ENCODE measurements at regions of chr11 and their contacts with region 1.

Region 1: DNA sequence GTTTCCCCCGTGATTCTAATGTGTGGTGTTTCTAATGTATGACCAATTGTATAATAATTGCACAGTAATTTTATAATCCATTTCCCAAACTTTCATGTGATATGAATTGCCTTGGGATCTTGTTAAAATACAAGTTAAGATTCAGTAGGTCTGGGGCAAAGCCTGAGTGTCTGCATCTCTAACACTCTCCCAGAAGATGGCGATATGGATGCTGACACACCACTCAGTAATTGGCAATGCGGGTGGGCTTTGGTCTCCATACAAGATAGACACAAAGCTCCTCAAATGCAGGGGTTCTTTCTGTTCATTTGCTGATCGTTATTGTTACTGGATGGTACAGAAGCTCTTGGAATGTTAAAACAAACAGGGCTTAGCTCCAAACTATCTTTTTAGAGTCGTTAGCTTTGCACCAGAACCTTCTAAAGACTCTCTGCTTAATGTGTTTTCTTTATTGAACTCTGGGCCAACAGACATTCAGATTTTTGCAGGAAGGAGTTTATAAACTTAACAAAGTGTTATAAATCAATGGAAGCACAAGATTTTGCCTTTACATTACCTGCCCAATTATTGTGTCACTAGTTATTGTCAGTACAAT is 45.4 kb upstream of the ANO3 start:
- DNase-seq: no peak
- ATAC-seq: no peak
- H3K4me3 Mint-ChIP-seq: no peak overlapping the region
- H3K27ac Mint-ChIP-seq: no peak overlapping the region
- H3K4me1 Mint-ChIP-seq: peaks cover 5% of the 10 kb centered on the region
- H3K27me3 Mint-ChIP-seq: peaks cover 4% of the 10 kb centered on the region
- CTCF ChIP-seq: no peak

Region 2: GRCh38 chr11:25655636-25656035 is 630.9 kb before region 1 on chr11:
- CTCF ChIA-PET with region 1: no interaction called
- POLR2A ChIA-PET with region 1: no interaction called
- intact Hi-C with region 1: no loop called
- DNase-seq: no peak
- ATAC-seq: no peak
- H3K4me3 Mint-ChIP-seq: no peak overlapping the region
- H3K27ac Mint-ChIP-seq: no peak overlapping the region
- H3K4me1 Mint-ChIP-seq: no peaks in the 10 kb centered on the region
- H3K27me3 Mint-ChIP-seq: no peaks in the 10 kb centered on the region
- CTCF ChIP-seq: no peak

Region 3: DNA sequence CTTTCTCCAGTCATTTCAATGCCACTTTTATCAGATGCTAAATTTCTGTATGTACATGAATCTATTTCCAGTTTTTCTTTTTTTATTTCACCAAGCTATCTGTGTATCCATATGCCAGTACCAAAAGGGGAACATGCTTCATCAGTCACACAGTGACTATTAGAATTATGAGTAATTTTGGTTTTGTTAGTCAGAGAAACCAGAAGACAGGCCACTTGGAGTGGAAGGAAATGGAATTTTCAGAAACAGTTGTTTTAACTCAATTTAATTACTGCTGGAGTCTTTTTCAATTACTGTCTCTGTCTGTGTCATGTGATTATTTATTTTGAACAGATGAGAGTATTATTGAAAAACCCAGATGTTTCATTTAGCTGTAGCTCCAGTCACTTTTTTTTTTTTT is 39.2 kb before region 1 on chr11:
- CTCF ChIA-PET with region 1: no interaction called
- POLR2A ChIA-PET with region 1: no interaction called
- intact Hi-C with region 1: no loop called
- DNase-seq: no peak
- ATAC-seq: no peak
- H3K4me3 Mint-ChIP-seq: no peak overlapping the region
- H3K27ac Mint-ChIP-seq: no peak overlapping the region
- H3K4me1 Mint-ChIP-seq: no peaks in the 10 kb centered on the region
- H3K27me3 Mint-ChIP-seq: peaks cover 4% of the 10 kb centered on the region
- CTCF ChIP-seq: no peak

Region 4: DNA sequence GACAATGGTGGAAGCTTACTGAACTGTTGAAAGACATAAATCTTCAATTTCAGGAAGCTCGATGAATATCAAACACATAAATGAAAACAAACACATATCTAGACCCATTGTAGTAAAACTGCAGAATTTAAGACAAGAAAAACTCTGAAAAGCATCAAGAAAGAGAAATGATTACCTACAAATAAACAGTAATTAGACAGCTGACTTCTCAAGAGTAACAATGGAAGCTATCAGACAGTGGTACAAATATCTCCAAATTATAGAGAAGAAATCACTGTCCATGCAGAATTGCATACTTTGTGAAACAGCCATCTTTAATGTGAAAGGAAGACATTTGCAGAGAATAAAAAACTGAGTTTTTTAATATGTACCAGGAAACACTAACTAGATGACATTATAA is 91.0 kb after region 1 on chr11:
- CTCF ChIA-PET with region 1: no interaction called
- POLR2A ChIA-PET with region 1: no interaction called
- intact Hi-C with region 1: no loop called
- DNase-seq: no peak
- ATAC-seq: no peak
- H3K4me3 Mint-ChIP-seq: no peak overlapping the region
- H3K27ac Mint-ChIP-seq: no peak overlapping the region
- H3K4me1 Mint-ChIP-seq: no peaks in the 10 kb centered on the region
- H3K27me3 Mint-ChIP-seq: no peaks in the 10 kb centered on the region
- CTCF ChIP-seq: no peak

Region 5: DNA sequence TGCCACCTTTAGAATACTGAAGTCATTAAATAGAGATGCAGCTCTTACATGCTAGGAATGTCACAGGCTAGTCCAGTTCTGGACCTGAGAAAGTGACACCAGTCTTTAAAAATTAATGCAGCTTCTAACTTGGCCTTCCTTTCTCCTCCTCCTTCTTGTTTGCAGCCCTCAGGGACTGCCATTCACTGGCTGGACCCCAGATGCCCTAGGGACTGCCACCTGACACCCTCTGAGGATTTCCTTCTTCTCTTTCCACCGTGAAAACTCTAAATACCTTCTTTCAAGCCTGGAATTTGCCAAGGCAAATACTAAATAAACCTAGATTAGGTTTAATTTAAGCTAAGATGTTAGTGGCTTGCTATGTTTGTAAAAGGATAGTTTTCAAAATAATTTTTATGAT is 207.0 kb after region 1 on chr11:
- CTCF ChIA-PET with region 1: no interaction called
- POLR2A ChIA-PET with region 1: no interaction called
- intact Hi-C with region 1: no loop called
- DNase-seq: no peak
- ATAC-seq: no peak
- H3K4me3 Mint-ChIP-seq: no peak overlapping the region
- H3K27ac Mint-ChIP-seq: no peak overlapping the region
- H3K4me1 Mint-ChIP-seq: no peaks in the 10 kb centered on the region
- H3K27me3 Mint-ChIP-seq: no peaks in the 10 kb centered on the region
- CTCF ChIP-seq: no peak

Region 6: GRCh38 chr11:26649884-26650283 is 363.3 kb after region 1 on chr11:
- CTCF ChIA-PET with region 1: no interaction called
- POLR2A ChIA-PET with region 1: no interaction called
- intact Hi-C with region 1: loop called (anchors 5 kb)
- DNase-seq: no peak
- ATAC-seq: no peak
- H3K4me3 Mint-ChIP-seq: no peak overlapping the region
- H3K27ac Mint-ChIP-seq: no peak overlapping the region
- H3K4me1 Mint-ChIP-seq: no peaks in the 10 kb centered on the region
- H3K27me3 Mint-ChIP-seq: no peaks in the 10 kb centered on the region
- CTCF ChIP-seq: peak; percentile 40

Region 7: DNA sequence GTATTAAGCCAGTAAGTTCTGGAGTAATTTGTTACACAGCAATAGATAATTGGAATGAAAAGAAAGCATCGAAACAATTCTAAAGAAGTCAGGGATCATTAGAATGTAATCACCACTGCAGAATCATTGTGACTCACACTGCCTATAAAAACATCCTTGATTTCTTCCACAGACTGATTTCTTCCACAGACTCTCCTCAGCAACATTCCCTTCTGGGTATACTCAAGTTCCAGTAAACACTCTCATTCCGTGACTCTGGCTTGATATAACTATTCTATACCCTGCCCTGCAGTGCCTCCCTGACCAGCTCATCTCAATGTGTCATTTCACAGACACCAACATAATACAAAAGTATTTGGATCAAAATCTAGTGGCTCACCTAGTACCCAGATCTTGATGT is 874.5 kb after region 1 on chr11:
- CTCF ChIA-PET with region 1: no interaction called
- POLR2A ChIA-PET with region 1: no interaction called
- intact Hi-C with region 1: loop called (anchors 10 kb)
- DNase-seq: no peak
- ATAC-seq: no peak
- H3K4me3 Mint-ChIP-seq: no peak overlapping the region
- H3K27ac Mint-ChIP-seq: no peak overlapping the region
- H3K4me1 Mint-ChIP-seq: no peaks in the 10 kb centered on the region
- H3K27me3 Mint-ChIP-seq: peaks cover 2% of the 10 kb centered on the region
- CTCF ChIP-seq: no peak

Measured in activated B cell treated with CpG ODN at 0.5 μM for 24 hours (primary cell).